OCI-LY7 (cell line): ENCODE measurements at regions of chr2 and their contacts with region 1.

Region 1: GRCh38 chr2:196277002-196277401 is 105.6 kb upstream of the STK17B start:
- DNase-seq: peak; percentile 81
- H3K4me3 ChIP-seq: peak overlapping the region; percentile 56
- H3K27ac ChIP-seq: peak overlapping the region; percentile 100
- H3K4me1 ChIP-seq: peaks cover 49% of the 10 kb centered on the region
- CTCF ChIP-seq: peak; percentile 97

Region 2: DNA sequence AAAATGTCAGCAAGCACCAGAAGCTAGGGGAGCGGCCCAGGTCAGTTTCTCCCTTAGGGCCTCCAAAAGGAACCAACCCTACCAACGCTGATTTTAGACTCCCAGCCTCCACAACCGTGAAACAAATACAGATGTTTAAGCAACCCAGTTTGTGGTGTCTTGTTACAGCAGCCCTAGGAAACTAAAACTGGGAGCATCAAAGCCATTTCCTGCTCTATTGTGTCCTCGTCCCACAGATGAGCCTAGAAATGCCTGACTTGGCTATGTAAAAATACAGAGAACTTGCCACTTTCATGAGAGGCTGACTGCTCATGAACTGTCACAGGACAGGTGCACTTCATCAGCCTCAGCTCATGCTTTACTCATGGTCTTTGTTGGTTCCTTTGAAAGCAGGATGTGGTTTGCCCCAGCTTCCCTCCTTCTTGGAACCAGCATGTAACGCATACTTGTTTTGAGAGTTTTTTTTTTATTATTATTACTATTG is 717.5 kb before region 1 on chr2:
- CTCF ChIA-PET with region 1: no interaction called
- POLR2A ChIA-PET with region 1: no interaction called
- intact Hi-C with region 1: loop called (anchors 10 kb)
- DNase-seq: peak; percentile 97
- H3K4me3 ChIP-seq: peak overlapping the region; percentile 38
- H3K27ac ChIP-seq: peak overlapping the region; percentile 95
- H3K4me1 ChIP-seq: peaks cover 68% of the 10 kb centered on the region
- CTCF ChIP-seq: no peak

Region 3: DNA sequence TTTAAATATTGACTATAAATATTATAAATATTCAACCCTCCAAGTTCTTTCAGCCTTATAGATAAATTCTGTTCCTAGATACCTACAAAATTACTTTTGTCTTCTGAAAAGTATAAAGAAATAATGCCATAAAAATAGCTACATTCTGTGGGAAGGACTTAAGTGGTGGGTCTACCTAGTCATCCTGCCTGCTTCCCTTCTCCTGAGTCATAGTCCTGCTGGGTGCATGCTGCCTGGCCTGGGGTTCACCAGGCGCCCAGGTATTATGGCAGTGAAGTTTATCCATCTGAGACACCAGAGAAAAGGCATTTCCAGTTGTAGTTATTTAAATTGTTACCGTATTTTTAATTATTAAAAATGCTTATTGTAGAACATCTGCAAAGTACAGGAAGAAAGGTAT is 452.5 kb before region 1 on chr2:
- CTCF ChIA-PET with region 1: no interaction called
- POLR2A ChIA-PET with region 1: no interaction called
- intact Hi-C with region 1: no loop called
- DNase-seq: no peak
- H3K4me3 ChIP-seq: no peak overlapping the region
- H3K27ac ChIP-seq: no peak overlapping the region
- H3K4me1 ChIP-seq: no peaks in the 10 kb centered on the region
- CTCF ChIP-seq: no peak

Region 4: DNA sequence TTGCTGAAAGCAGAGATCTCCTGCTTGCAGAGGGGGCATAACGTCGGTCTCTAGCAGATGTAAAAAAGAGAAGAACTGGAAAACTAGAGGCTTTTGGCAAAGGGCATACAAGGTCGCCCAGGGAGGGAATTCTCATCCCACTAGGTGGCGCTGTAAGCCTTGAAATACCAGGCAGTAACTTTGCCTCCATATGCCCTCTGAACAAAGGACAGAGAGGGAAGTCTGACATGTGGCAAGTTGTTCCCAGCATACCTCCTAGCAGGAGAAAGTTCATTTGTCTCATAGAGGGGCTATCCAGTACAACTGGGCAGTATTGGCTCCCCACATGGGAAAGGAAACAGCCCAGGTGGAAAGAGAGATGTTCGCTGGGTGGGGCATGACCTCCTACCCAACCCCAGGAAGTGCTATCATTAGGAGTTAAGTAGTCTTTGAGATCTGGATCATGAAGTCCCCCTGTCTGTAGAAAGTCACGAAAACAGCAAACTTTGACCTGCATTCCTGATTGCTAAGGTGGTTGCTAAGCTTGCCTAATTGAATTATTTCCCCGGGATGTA is 145.5 kb before region 1 on chr2:
- CTCF ChIA-PET with region 1: interaction called, 4 read pairs
- POLR2A ChIA-PET with region 1: interaction called, 5 read pairs
- intact Hi-C with region 1: loop called (anchors 1 kb)
- DNase-seq: peak; percentile 86
- H3K4me3 ChIP-seq: no peak overlapping the region
- H3K27ac ChIP-seq: peak overlapping the region; percentile 41
- H3K4me1 ChIP-seq: peaks cover 5% of the 10 kb centered on the region
- CTCF ChIP-seq: peak; percentile 92

Region 5: GRCh38 chr2:196213252-196213980 is 63.6 kb before region 1 on chr2:
- CTCF ChIA-PET with region 1: no interaction called
- POLR2A ChIA-PET with region 1: interaction called, 22 read pairs
- intact Hi-C with region 1: loop called (anchors 1 kb)
- DNase-seq: peak; percentile 30
- H3K4me3 ChIP-seq: no peak overlapping the region
- H3K27ac ChIP-seq: no peak overlapping the region
- H3K4me1 ChIP-seq: peaks cover 50% of the 10 kb centered on the region
- CTCF ChIP-seq: no peak

Region 6: DNA sequence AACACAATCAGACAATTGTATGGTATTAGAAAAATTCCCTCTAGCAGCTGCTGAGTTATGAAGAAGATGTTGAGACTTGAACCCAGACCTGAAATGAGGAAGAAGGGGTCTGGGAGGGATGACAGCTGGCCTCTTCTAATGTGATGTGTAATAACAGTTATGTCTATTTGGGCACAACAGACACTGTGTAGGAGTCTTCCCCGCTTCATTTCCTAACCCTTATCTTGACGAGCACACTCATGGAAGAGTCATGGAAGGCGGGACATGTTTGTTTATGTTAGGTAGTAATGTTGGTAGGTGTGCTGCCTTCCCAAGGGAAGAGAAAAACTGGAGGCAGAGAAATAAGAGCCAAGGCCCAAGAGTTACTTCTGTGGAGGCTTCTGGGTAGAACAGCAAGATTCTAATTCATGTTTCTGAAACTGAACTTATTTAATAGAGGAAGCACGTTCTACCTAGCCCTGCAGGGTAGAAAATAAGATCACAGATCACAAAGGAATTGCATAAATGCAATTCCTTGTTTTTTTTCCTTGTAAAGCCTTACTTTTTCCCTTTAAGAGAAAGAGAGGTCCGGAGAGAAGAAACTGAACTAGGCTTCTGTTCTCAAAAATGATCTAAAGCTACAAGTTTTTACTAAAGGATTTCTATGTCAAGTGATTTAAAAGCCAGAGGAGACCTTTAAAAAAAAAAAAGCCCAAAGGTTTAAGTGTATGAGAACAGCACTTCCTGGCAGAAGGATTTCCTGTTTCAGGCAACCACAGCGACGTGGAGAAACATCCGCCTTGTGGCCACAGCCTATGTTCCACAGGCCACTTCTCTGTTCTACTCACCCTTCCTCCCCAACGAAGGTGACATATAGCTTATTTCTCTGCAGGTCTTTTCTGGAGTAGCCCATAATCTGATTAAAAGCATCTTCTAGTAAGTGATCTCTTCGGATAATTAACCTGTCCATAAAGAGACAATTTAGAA is 37.1 kb before region 1 on chr2:
- CTCF ChIA-PET with region 1: interaction called, 12 read pairs
- POLR2A ChIA-PET with region 1: interaction called, 59 read pairs
- intact Hi-C with region 1: loop called (anchors 1 kb)
- DNase-seq: peak; percentile 96
- H3K4me3 ChIP-seq: peak overlapping the region; percentile 53
- H3K27ac ChIP-seq: peak overlapping the region; percentile 93
- H3K4me1 ChIP-seq: peaks cover 63% of the 10 kb centered on the region
- CTCF ChIP-seq: peak; percentile 37; the same call in 1 of the 2 replicates

Region 7: DNA sequence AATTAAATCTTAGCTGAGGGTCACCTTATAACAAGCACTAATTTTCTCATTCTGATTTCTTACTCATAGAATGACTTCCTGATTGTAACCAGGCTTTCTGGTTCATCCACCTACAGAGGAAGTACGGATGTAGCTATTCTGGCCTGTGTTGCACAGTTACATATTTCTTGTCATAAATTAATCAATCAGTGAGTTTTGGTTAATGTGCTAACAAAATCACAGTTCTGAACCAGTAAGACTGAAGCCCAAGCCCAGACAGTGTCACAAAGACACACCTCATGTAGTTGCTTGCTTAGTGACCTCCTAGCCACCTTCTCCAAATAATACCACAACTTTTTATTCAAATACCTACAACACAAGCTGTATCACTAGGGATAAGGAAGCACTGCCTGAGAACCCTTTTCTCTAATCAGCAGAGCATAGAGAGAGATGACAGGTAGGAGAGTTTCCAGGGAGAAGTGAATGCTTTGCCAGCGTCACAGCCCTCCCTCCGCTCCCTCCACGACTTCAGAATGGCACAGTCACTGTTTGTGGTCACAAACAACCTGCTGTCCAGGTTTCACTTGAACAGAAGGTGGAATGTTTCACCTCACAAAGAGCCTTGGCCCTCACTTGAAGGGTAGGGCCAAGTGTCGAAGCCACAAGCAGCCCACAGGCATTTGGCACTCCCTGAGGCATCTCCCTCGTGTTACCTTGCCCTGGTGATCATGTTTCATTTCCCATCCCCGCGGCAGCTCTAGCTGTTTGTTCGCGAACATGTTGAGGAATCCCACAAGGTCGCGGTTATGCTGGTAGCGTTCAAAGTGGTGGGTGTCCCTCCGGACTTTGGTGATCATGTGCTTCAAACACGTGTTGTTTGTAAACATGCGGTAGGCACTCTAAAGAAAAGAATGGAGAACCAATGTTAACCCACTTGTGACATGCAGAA is 15.1 kb after region 1 on chr2:
- CTCF ChIA-PET with region 1: interaction called, 3 read pairs
- POLR2A ChIA-PET with region 1: interaction called, 10 read pairs
- intact Hi-C with region 1: no loop called
- DNase-seq: no peak
- H3K4me3 ChIP-seq: no peak overlapping the region
- H3K27ac ChIP-seq: no peak overlapping the region
- H3K4me1 ChIP-seq: peaks cover 12% of the 10 kb centered on the region
- CTCF ChIP-seq: no peak